AG04449 (cell line): ENCODE measurements at regions of chr17 and their contacts with region 1.

Region 1: GRCh38 chr17:46940621-46941404 is 17.9 kb downstream of the GOSR2 start:
- DNase-seq: no peak
- H3K4me3 ChIP-seq: no peak overlapping the region
- CTCF ChIP-seq: peak; percentile 96

Region 2: DNA sequence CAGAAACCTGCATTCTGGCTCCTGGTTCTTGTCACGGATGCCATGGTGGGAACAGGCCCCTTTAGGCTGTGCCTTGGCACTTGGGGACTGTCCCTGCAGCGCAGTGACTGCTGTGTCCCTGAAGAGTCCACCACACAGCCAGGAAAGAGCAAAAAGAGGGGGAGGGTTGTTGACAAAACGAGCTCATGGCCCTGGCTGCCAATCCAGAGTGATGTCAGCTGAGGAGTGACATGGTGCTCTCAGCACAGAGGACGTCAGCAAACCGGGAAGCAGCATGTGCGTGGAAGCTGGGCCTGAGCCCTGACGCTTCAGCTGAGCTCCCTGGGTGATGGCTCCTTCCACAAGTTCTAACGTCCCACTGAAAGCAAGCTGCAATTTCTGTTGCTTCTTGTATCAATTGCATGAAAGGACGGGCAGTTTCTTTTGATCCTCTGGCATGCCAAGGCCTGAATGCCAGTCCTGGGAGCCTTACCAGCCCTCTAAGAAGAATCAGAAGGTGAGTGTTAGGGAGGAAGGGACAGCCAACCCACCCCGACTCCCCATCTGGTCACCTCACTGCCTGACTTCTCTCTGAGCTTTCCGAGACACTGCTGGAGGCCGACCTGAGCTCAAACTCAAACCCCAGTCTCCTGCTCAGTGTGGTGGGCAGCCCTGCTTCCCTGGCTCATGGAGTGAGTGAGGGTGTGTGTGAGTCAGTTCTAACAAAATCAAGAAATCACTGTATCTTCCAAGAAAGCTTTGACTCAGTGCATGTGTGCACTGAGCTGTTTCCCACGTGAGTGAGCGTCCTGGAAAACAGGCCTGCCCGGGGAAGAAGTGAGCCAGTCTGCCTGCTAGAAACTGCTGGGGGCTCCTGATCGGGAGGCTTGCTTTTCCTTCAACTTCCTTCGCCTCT is 107.6 kb before region 1 on chr17:
- CTCF ChIA-PET with region 1: interaction called, 32 read pairs
- POLR2A ChIA-PET with region 1: interaction called, 4 read pairs
- DNase-seq: no peak
- H3K4me3 ChIP-seq: no peak overlapping the region
- CTCF ChIP-seq: no peak

Region 3: DNA sequence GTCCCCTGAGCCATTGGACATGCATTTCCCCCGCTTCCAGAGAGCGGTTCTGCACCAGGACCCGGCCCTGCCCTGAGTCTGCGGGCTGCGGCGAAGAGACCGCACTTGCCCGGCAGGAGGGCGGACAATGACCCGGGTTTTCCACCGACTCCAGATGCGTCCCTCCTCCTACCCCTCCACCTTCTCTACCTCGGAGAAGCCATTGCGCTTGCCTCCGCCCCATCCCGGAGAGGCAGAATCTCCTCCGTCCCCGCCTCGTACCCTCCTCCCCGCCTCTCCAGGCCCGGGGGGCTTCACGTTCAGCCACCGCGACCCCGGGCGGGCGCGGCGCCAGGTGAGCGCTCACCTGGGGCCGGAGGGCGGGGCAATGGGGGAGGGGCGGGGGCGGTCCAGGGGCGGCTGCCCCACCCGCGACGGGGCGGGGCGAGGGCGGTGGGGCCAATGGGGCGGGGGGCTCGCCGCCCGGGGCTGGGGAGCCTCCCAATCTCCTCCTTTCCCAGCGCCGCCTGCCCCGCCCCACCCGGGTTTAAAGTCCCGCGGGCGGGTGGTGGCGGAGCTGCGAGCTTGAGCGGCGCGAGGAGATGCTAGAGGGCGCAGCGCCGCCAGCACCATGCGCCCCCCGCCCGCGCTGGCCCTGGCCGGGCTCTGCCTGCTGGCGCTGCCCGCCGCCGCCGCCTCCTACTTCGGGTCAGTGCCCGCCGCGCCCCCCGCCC is 89.6 kb before region 1 on chr17 and contains the start of gene WNT9B:
- CTCF ChIA-PET with region 1: interaction called, 28 read pairs
- POLR2A ChIA-PET with region 1: no interaction called
- DNase-seq: no peak
- H3K4me3 ChIP-seq: peak within 1 kb of the TSS; percentile 32
- CTCF ChIP-seq: no peak

Region 4: DNA sequence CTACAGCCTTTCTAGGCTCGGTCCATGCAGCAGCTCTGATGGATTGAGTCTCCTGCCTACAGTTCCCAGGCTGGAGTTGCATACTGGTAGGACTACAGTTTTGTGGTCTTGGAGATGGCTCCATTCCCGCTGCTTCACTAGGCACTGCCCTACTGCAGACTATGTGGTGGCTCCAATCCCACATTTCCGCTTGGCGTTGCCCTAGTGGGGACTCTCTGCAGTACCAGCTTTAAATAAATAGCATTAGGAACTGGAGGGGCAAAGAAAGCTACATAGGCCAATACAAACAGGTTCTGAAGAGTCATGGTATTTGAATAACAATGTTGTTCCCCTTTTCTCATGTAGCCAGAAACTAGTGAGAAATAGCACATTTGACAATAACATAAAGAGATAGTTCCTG is 23.3 kb before region 1 on chr17:
- CTCF ChIA-PET with region 1: interaction called, 25 read pairs
- POLR2A ChIA-PET with region 1: no interaction called
- DNase-seq: no peak
- H3K4me3 ChIP-seq: no peak overlapping the region
- CTCF ChIP-seq: no peak

Region 5: GRCh38 chr17:46964315-46965253 is 23.8 kb after region 1 on chr17:
- CTCF ChIA-PET with region 1: interaction called, 50 read pairs
- POLR2A ChIA-PET with region 1: no interaction called
- DNase-seq: no peak
- H3K4me3 ChIP-seq: no peak overlapping the region
- CTCF ChIP-seq: no peak

Region 6: DNA sequence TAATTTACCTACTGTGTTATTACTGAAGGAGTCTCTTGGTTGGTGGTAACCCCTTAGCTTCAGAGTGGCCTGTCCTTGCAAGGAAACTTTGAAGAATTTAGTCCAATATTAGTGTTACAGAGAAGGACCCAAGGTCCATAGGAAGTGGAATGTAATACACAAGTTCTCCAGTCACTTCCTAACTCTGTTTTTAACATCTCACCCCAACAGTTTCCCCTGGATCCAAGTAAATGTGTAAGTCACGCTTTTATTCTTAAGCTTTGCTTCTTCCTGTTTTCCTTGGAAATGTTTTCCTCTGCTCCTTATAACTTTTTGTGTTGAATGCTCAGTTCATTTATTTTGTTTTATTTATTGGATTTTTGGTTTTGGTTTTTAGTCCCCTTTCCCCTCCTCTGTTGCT is 64.1 kb after region 1 on chr17:
- CTCF ChIA-PET with region 1: interaction called, 44 read pairs
- POLR2A ChIA-PET with region 1: interaction called, 3 read pairs
- DNase-seq: no peak
- H3K4me3 ChIP-seq: no peak overlapping the region
- CTCF ChIP-seq: no peak